Activated CD4-positive, alpha-beta memory T cell treated with anti-CD3 and anti-CD28 coated beads for 36 hours (primary cell): ENCODE measurements at regions of chr6 and their contacts with region 1.

Region 1: GRCh38 chr6:37489660-37490361 is 9.9 kb downstream of the CCDC167 start:
- DNase-seq: peak; percentile 51
- H3K4me3 Mint-ChIP-seq: no peak overlapping the region
- H3K27ac Mint-ChIP-seq: peak overlapping the region; percentile 76
- H3K4me1 Mint-ChIP-seq: peaks cover 70% of the 10 kb centered on the region
- H3K27me3 Mint-ChIP-seq: no peaks in the 10 kb centered on the region

Region 2: GRCh38 chr6:37381579-37381978 is 108.2 kb before region 1 on chr6:
- CTCF ChIA-PET with region 1: interaction called, 3 read pairs
- POLR2A ChIA-PET with region 1: no interaction called
- intact Hi-C with region 1: loop called (anchors 2 kb)
- DNase-seq: peak; percentile 16
- H3K4me3 Mint-ChIP-seq: no peak overlapping the region
- H3K27ac Mint-ChIP-seq: no peak overlapping the region
- H3K4me1 Mint-ChIP-seq: no peaks in the 10 kb centered on the region
- H3K27me3 Mint-ChIP-seq: no peaks in the 10 kb centered on the region

Region 3: DNA sequence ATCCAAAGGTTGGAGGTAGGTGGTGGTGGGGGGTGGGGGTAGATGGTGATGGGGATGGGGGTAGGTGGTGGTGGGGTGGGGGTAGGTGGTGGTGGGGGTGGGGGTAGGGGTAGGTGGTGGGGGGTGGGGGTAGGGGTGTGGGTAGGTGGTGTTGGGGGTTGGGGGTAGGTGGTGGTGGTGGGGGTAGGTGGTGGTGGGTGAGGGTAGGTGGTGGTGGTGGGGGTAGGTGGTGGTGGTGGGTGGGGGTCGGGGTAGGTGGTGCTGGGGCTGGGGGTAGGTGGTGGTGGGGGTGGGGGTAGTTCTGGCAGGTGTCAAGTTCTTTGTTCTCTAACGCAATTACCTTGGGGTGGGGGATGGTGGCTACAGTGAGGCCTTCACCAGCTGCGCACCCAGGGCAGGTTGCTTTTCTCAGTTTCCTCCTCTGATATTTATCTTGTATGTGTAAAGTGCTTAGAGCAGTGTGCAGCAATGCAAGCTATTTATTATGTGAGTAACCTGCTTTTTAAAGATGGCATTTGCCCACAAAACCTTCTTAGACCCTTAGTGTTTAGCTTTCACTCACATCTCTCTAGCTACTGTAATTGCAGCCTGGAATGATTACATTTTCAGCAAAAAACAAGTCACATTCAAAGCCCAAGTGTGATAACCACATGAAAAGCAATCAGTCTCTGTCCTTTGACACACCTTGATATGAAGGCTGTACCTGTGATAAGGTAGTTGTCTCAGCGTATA is 18.0 kb after region 1 on chr6:
- CTCF ChIA-PET with region 1: interaction called, 13 read pairs
- POLR2A ChIA-PET with region 1: interaction called, 15 read pairs
- intact Hi-C with region 1: loop called (anchors 1 kb)
- DNase-seq: peak; percentile 69
- H3K4me3 Mint-ChIP-seq: no peak overlapping the region
- H3K27ac Mint-ChIP-seq: peak overlapping the region; percentile 30
- H3K4me1 Mint-ChIP-seq: peaks cover 62% of the 10 kb centered on the region
- H3K27me3 Mint-ChIP-seq: no peaks in the 10 kb centered on the region

Region 4: GRCh38 chr6:37516076-37516919 is 26.5 kb after region 1 on chr6:
- CTCF ChIA-PET with region 1: interaction called, 34 read pairs
- POLR2A ChIA-PET with region 1: interaction called, 37 read pairs
- intact Hi-C with region 1: loop called (anchors 1 kb)
- DNase-seq: peak; percentile 96
- H3K4me3 Mint-ChIP-seq: peak overlapping the region; percentile 78
- H3K27ac Mint-ChIP-seq: peak overlapping the region; percentile 95
- H3K4me1 Mint-ChIP-seq: peaks cover 82% of the 10 kb centered on the region
- H3K27me3 Mint-ChIP-seq: no peaks in the 10 kb centered on the region